ENCODE measurements at regions of chr1 and their contacts with region 1.

Region 1: GRCh38 chr1:170481000-170481399 is 51.0 kb upstream of the GORAB start:
- DNase-seq: no peak
- ATAC-seq: no peak
- H3K4me3 ChIP-seq: no peak overlapping the region
- H3K27ac ChIP-seq: no peak overlapping the region
- H3K4me1 ChIP-seq: no peaks in the 10 kb centered on the region
- H3K27me3 ChIP-seq: no peaks in the 10 kb centered on the region
- CTCF ChIP-seq: no peak
- EP300 ChIP-seq: no peak
- POLR2A ChIP-seq: no peak
- RAD21 ChIP-seq: no peak

Region 2: DNA sequence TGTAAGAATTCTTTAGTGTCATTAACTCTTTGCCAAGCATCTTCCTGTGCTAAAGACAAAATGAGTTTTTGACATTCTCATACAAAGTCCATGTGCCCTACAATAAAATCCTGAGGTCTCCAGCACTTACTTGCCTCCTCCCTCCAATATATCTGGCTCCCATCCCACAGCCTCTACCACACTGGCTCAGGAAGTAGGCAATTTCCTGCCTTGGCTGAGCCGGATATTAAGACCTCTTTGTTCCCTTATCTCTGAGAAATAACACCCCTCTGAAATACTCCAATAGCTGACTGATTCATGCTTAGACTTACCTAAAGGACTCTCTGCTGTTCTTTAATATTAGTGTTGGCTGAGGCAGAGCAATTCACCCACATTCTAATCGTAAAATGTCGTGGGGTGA is 13.4 kb after region 1 on chr1:
- CTCF ChIA-PET with region 1: interaction called, 3 read pairs
- POLR2A ChIA-PET with region 1: no interaction called
- RAD21 ChIA-PET with region 1: no interaction called
- SMC1A ChIA-PET with region 1: interaction called, 16 read pairs
- in situ Hi-C with region 1: no loop called
- intact Hi-C with region 1: no loop called
- DNase-seq: no peak
- ATAC-seq: no peak
- H3K4me3 ChIP-seq: no peak overlapping the region
- H3K27ac ChIP-seq: no peak overlapping the region
- H3K4me1 ChIP-seq: no peaks in the 10 kb centered on the region
- H3K27me3 ChIP-seq: no peaks in the 10 kb centered on the region; a peak in 1 of 4 replicates
- CTCF ChIP-seq: no peak
- EP300 ChIP-seq: no peak
- POLR2A ChIP-seq: no peak
- RAD21 ChIP-seq: no peak